ENCODE measurements at regions of chr17 and their contacts with region 1.

Region 1: GRCh38 chr17:77429919-77430752 is 289.4 kb downstream of the SEC14L1 start:
- DNase-seq: peak in 1 of 2 donors; percentile 99
- H3K4me3 ChIP-seq: no peak overlapping the region
- H3K27ac ChIP-seq: peak overlapping the region; percentile 98
- H3K4me1 ChIP-seq: peaks cover 100% of the 10 kb centered on the region
- H3K27me3 ChIP-seq: no peaks in the 10 kb centered on the region
- CTCF ChIP-seq: peak; percentile 66 to 89 (median 74)
- POLR2A ChIP-seq: no peak

Region 2: GRCh38 chr17:77494664-77495435 is 64.7 kb after region 1 on chr17:
- intact Hi-C with region 1: loop called (anchors 5 kb)
- DNase-seq: no peak
- H3K4me3 ChIP-seq: no peak overlapping the region
- H3K27ac ChIP-seq: peak overlapping the region; percentile 74
- H3K4me1 ChIP-seq: peaks cover 25% of the 10 kb centered on the region
- H3K27me3 ChIP-seq: no peaks in the 10 kb centered on the region
- CTCF ChIP-seq: peak; percentile 97 to 99 (median 98)
- POLR2A ChIP-seq: no peak

Measured in vagina (tissue), 2 donors.